GM12878 (cell line): ENCODE measurements at regions of chr10 and their contacts with region 1.

Region 1: DNA sequence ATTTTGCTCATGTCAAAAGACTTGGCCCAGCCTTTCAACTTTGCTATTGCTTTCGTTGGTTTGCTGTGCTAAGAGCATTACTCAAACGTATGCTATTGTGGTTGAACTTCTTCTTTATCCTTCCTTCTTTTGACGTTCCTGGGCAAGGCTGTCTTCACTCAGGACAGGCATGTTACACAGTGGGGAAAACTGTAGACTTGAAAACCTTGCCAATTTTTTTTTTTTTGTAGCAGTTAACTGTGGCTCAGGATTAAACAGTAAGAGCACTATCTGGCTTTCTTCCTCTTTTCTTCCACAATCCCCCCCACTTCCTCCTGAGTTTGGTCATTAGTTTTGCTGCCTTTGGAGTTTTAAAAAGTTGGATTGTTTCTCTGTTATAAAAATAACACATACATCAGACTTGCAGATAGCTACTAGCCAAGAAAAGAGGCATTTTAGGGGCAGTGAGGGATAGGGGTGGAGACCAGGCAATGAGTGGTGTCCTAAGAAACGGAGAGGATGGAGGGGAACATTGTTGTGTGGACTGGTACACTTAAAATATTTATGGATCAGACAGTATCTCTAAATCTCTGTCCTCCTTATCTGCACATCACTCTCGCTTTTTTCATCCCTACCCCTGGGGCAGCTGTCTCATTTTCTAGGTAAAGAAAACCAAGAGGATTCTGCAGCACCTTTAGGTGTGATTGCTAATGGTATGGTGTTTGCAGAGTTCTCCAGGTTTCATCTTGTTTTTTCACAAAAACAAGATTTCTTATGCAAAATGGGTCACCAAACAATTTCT is 181.7 kb downstream of the LRMDA start:
- DNase-seq: peak; percentile 50
- ATAC-seq: peak; percentile 43
- H3K4me3 ChIP-seq: no peak overlapping the region
- H3K27ac ChIP-seq: peak overlapping the region; percentile 5; the same call in 1 of the 2 replicates
- H3K4me1 ChIP-seq: peaks cover 12% of the 10 kb centered on the region
- H3K27me3 ChIP-seq: no peaks in the 10 kb centered on the region
- CTCF ChIP-seq: no peak
- EP300 ChIP-seq: peak in 1 of 2 experiments; percentile 53; a peak in 1 of 4 replicates
- POLR2A ChIP-seq: no peak
- RAD21 ChIP-seq: no peak

Region 2: GRCh38 chr10:75035975-75036708 is 577.0 kb before region 1 on chr10:
- CTCF ChIA-PET with region 1: no interaction called
- POLR2A ChIA-PET with region 1: no interaction called
- RAD21 ChIA-PET with region 1: no interaction called
- SMC1A ChIA-PET with region 1: no interaction called
- in situ Hi-C with region 1: no loop called
- intact Hi-C with region 1: no loop called
- DNase-seq: no peak
- ATAC-seq: peak; percentile 80
- H3K4me3 ChIP-seq: no peak overlapping the region
- H3K27ac ChIP-seq: 0 out of 2 replicates have a peak overlapping the region, but pooled peaks have one; percentile 13
- H3K4me1 ChIP-seq: peaks cover 30% of the 10 kb centered on the region
- H3K27me3 ChIP-seq: no peaks in the 10 kb centered on the region
- CTCF ChIP-seq: no peak
- EP300 ChIP-seq: no peak
- POLR2A ChIP-seq: no peak
- RAD21 ChIP-seq: no peak

Region 3: DNA sequence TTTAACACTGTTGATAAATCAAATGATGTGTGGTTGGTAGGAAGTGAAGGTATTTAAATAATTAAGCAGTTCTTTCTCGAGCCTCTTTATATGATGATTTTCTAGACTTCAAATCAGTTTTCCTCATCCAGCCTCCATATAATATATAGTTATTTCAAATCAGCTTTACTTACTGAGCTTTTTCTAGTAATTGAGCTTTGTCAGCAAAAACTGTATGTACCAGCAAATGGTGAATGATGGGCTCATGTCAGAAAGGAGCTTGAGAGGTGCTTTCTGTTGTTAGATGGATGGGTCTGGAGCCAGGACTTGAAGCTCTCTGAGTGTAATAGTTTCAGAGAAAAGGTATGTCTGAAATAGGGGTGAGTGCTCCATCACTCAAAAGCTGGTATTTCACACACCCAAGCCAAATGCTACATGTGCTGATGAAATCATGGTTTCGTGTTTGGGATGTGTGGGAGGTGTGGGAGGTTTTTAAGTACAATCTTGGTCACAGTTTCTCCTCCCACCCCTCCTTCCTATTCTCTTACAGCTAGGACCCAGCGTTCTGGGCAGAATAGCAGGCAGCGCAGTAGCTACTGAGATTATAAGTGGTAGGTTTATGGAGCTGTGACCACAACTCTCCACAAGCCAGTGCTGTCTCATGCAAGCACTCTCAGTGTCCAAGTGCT is 125.9 kb before region 1 on chr10:
- CTCF ChIA-PET with region 1: no interaction called
- POLR2A ChIA-PET with region 1: interaction called, 3 read pairs
- RAD21 ChIA-PET with region 1: interaction called, 12 read pairs
- SMC1A ChIA-PET with region 1: no interaction called
- in situ Hi-C with region 1: no loop called
- intact Hi-C with region 1: no loop called
- DNase-seq: peak; percentile 19
- ATAC-seq: peak; percentile 92
- H3K4me3 ChIP-seq: no peak overlapping the region
- H3K27ac ChIP-seq: no peak overlapping the region
- H3K4me1 ChIP-seq: no peaks in the 10 kb centered on the region
- H3K27me3 ChIP-seq: no peaks in the 10 kb centered on the region
- CTCF ChIP-seq: no peak
- EP300 ChIP-seq: 0 out of 4 replicates have a peak, but pooled peaks of 1 of the 2 experiments have one; percentile 57
- POLR2A ChIP-seq: no peak
- RAD21 ChIP-seq: no peak

Region 4: GRCh38 chr10:75540357-75540966 is 72.6 kb before region 1 on chr10:
- CTCF ChIA-PET with region 1: interaction called, 3 read pairs
- POLR2A ChIA-PET with region 1: no interaction called
- RAD21 ChIA-PET with region 1: interaction called, 3 read pairs
- SMC1A ChIA-PET with region 1: interaction called, 30 read pairs
- in situ Hi-C with region 1: no loop called
- intact Hi-C with region 1: no loop called
- DNase-seq: no peak
- ATAC-seq: peak; percentile 86
- H3K4me3 ChIP-seq: no peak overlapping the region
- H3K27ac ChIP-seq: no peak overlapping the region
- H3K4me1 ChIP-seq: no peaks in the 10 kb centered on the region; the same call in 1 of the 2 replicates
- H3K27me3 ChIP-seq: no peaks in the 10 kb centered on the region; a peak in 1 of 4 replicates
- CTCF ChIP-seq: peak; percentile 1 to 17 (median 5); a peak in 1 of 6 replicates
- EP300 ChIP-seq: no peak
- POLR2A ChIP-seq: no peak
- RAD21 ChIP-seq: no peak

Region 5: GRCh38 chr10:75568450-75569130 is 44.5 kb before region 1 on chr10:
- CTCF ChIA-PET with region 1: interaction called, 5 read pairs
- POLR2A ChIA-PET with region 1: no interaction called
- RAD21 ChIA-PET with region 1: interaction called, 6 read pairs
- SMC1A ChIA-PET with region 1: interaction called, 10 read pairs
- in situ Hi-C with region 1: no loop called
- intact Hi-C with region 1: no loop called
- DNase-seq: no peak
- ATAC-seq: peak; percentile 60
- H3K4me3 ChIP-seq: no peak overlapping the region
- H3K27ac ChIP-seq: no peak overlapping the region
- H3K4me1 ChIP-seq: no peaks in the 10 kb centered on the region
- H3K27me3 ChIP-seq: no peaks in the 10 kb centered on the region
- CTCF ChIP-seq: no peak
- EP300 ChIP-seq: no peak
- POLR2A ChIP-seq: no peak
- RAD21 ChIP-seq: no peak

Region 6: GRCh38 chr10:75772153-75772887 is 159.2 kb after region 1 on chr10:
- CTCF ChIA-PET with region 1: no interaction called
- POLR2A ChIA-PET with region 1: no interaction called
- RAD21 ChIA-PET with region 1: interaction called, 3 read pairs
- SMC1A ChIA-PET with region 1: no interaction called
- in situ Hi-C with region 1: no loop called
- intact Hi-C with region 1: loop called (anchors 5 kb)
- DNase-seq: no peak
- ATAC-seq: peak; percentile 59
- H3K4me3 ChIP-seq: no peak overlapping the region
- H3K27ac ChIP-seq: no peak overlapping the region
- H3K4me1 ChIP-seq: peaks cover 4% of the 10 kb centered on the region; the same call in 1 of the 2 replicates
- H3K27me3 ChIP-seq: peaks cover 0 to 2% of the 10 kb centered on the region in 2 experiments; a peak in 1 of 4 replicates
- CTCF ChIP-seq: no peak
- EP300 ChIP-seq: no peak
- POLR2A ChIP-seq: no peak
- RAD21 ChIP-seq: no peak